HepG2 (cell line): ENCODE measurements at regions of chr6 and their contacts with region 1.

Region 1: GRCh38 chr6:133034509-133035206 is 206.5 kb upstream of the EYA4 start:
- DNase-seq: peak; percentile 99
- ATAC-seq: peak; percentile 97
- H3K4me3 ChIP-seq: peak overlapping the region in 2 of 3 experiments; percentile 25 to 35; a peak in 4 of 6 replicates
- H3K27ac ChIP-seq: peak overlapping the region; percentile 77
- H3K4me1 ChIP-seq: peaks cover 37% of the 10 kb centered on the region
- H3K27me3 ChIP-seq: no peaks in the 10 kb centered on the region
- CTCF ChIP-seq: no peak
- EP300 ChIP-seq: peak; percentile 74 to 96; a peak in 3 of 4 replicates
- POLR2A ChIP-seq: no peak
- RAD21 ChIP-seq: no peak

Region 2: GRCh38 chr6:132820629-132821381 is 213.9 kb before region 1 on chr6:
- CTCF ChIA-PET with region 1: no interaction called
- POLR2A ChIA-PET with region 1: interaction called, 8 read pairs
- in situ Hi-C with region 1: no loop called
- intact Hi-C with region 1: loop called (anchors 5 kb)
- DNase-seq: peak; percentile 20
- ATAC-seq: peak; percentile 65
- H3K4me3 ChIP-seq: no peak overlapping the region
- H3K27ac ChIP-seq: no peak overlapping the region
- H3K4me1 ChIP-seq: peaks cover 46% of the 10 kb centered on the region
- H3K27me3 ChIP-seq: no peaks in the 10 kb centered on the region; a peak in 1 of 5 replicates
- CTCF ChIP-seq: no peak
- EP300 ChIP-seq: no peak
- POLR2A ChIP-seq: peak; percentile 48 to 76; a peak in 3 of 4 replicates
- RAD21 ChIP-seq: no peak